ENCODE measurements at regions of chr2 and their contacts with region 1.

Region 1: DNA sequence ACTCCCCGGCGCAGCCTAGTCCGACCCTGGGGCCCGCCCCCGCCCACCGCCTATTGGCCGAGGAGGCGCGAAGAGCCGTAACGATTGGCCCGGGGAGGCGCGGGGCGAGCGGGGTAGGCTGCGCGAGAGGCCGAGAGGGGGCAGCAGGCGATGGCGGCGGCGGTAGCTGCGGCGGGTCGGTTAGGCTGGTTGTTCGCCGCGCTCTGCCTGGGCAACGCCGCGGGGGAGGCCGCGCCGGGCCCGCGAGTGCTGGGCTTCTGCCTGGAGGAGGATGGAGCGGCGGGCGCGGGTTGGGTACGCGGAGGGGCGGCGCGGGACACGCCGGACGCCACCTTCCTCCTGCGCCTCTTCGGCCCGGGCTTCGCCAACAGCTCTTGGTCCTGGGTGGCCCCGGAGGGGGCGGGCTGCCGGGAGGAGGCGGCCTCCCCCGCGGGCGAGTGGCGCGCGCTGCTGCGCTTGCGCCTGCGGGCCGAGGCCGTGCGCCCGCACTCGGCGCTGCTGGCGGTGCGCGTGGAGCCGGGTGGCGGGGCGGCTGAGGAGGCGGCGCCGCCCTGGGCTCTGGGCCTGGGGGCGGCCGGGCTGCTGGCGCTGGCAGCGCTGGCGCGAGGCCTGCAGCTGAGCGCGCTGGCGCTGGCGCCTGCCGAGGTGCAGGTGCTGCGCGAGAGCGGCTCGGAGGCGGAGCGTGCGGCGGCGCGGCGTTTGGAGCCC is at the start of gene CNNM3:
- DNase-seq: peak; percentile 91
- ATAC-seq: peak; percentile 87
- H3K4me3 ChIP-seq: peak within 1 kb of the TSS; percentile 87 to 96 (median 91)
- H3K27ac ChIP-seq: peak within 1 kb of the TSS; percentile 92
- H3K4me1 ChIP-seq: peaks cover 72% of the 10 kb centered on the region
- H3K27me3 ChIP-seq: no peaks in the 10 kb centered on the region; a peak in 1 of 5 replicates
- CTCF ChIP-seq: peak; percentile 72
- EP300 ChIP-seq: no peak
- POLR2A ChIP-seq: peak in 1 of 2 experiments; percentile 65; a peak in 2 of 4 replicates
- RAD21 ChIP-seq: peak; percentile 27
- total RNA-seq, gene CNNM3: 8.4 and 21.2 TPM in 2 replicates

Region 2: DNA sequence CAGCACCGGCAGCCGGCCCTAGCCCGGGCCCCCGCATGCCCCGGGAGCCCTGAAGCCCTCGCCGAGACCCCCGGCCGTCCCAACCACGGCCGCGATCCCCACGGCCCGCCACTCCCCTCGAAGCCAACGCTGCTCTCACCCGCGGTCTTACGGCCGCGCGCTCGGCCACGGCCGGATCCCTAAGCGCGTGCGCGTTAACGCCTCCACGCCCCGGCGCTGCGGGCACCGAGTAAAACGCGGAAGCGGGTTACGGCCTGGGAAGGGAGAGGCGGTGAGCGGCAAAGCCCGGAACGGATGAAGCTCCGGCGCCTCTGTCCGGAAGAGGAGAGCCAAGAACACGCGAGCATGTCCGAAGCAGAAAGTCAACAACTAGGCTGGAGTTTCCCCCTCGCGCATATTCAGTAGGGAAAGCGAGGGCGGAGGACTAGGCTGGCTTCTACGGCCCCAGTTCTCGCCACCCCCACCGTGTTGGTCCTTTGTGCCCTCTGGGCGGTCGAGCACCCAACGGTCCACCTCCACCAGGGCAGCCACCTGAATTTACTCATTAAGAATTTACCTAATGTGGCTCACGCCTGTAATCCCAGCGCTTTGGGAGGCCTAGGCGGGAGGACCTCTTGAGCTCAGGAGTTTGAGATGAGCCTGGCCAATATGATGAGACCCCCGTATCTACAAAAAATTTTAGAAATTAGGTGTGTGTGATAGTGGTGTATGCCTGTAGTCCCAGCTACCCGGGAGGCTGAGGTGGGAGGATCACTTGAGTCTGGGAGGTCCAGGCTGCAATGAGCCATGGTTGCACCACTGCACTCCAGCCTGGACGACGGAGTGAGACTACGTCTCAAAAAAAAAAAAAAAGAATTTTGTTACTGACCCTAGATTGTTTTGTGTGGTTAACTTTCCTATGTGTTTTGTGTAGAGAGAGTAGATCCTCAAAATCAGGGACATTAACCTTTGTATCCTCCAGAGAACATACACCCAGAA is 177.8 kb before region 1 on chr2 and contains the start of gene KANSL3:
- CTCF ChIA-PET with region 1: no interaction called
- POLR2A ChIA-PET with region 1: no interaction called
- in situ Hi-C with region 1: no loop called
- intact Hi-C with region 1: loop called (anchors 5 kb)
- DNase-seq: peak; percentile 87
- ATAC-seq: peak; percentile 79
- H3K4me3 ChIP-seq: peak within 1 kb of the TSS; percentile 83 to 93 (median 85)
- H3K27ac ChIP-seq: peak within 1 kb of the TSS; percentile 71
- H3K4me1 ChIP-seq: peaks cover 40% of the 10 kb centered on the region
- H3K27me3 ChIP-seq: no peaks in the 10 kb centered on the region; a peak in 1 of 5 replicates
- CTCF ChIP-seq: peak; percentile 45
- EP300 ChIP-seq: peak; percentile 73 to 87
- POLR2A ChIP-seq: peak; percentile 87 to 97
- RAD21 ChIP-seq: peak; percentile 82
- total RNA-seq, gene KANSL3: 37.3 and 43.9 TPM in 2 replicates

Region 3: GRCh38 chr2:96868555-96869280 is 52.4 kb after region 1 on chr2:
- CTCF ChIA-PET with region 1: no interaction called
- POLR2A ChIA-PET with region 1: interaction called, 18 read pairs
- in situ Hi-C with region 1: no loop called
- intact Hi-C with region 1: no loop called
- DNase-seq: peak; percentile 95
- ATAC-seq: peak; percentile 79
- H3K4me3 ChIP-seq: peak overlapping the region; percentile 81 to 100 (median 93)
- H3K27ac ChIP-seq: peak overlapping the region; percentile 96
- H3K4me1 ChIP-seq: peaks cover 35% of the 10 kb centered on the region
- H3K27me3 ChIP-seq: peaks cover under 1 to 22% of the 10 kb centered on the region in 2 experiments; a peak in 4 of 5 replicates
- CTCF ChIP-seq: peak; percentile 69
- EP300 ChIP-seq: peak in 1 of 2 experiments; percentile 56; a peak in 2 of 4 replicates
- POLR2A ChIP-seq: peak in 1 of 2 experiments; percentile 83; a peak in 2 of 4 replicates
- RAD21 ChIP-seq: peak; percentile 80